Naive thymus-derived CD8-positive, alpha-beta T cell (primary cell): ENCODE measurements at regions of chr17 and their contacts with region 1.

Region 1: DNA sequence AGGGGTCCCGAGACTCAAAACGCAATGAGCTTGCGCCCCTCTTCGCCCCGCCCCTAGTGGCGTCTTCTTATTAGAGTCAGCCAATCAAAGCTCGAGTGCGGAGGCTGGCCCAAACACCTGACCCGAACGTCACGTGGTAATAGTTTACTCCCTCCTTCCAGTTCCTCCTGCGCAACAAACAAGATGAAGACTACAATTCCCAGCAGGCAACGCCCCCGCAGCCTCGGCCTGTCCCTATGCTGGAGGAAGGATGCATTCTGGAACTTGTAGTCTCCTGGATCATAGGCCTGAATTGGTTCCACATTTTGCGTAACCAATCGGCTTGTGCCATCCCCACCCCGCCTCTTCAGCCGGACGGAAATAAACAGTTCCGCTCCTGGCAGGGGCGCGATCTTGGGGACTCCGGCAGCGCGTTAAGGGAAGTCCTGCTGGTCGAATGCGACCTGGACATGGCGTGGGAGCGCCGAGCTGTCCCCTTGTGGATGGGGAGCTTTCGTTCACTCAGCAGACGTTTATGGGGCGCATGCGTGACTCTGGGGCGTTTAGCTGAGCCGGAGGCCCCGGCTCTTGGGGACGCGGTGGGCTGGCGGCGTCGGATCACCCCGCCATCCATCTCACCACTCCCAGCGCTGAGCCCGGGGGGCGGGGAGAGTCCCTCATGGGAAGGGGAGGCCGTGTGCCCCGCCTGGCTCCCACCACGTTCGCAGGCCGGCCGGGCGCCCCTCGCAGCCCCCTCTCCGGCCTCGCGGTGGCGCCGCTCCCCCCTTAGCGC is at the start of gene WBP2:
- DNase-seq: peak; percentile 90 to 99 (median 98)
- ATAC-seq: peak; percentile 87 to 91
- H3K4me3 Mint-ChIP-seq: peak within 1 kb of the TSS in 2 of 10 donors; percentile 90 to 95
- H3K27ac Mint-ChIP-seq: peak within 1 kb of the TSS in 6 of 10 donors; percentile 90 to 97 (median 92)
- H3K4me1 Mint-ChIP-seq: peaks cover 6 to 44% (median 28%) of the 10 kb centered on the region in 4 donors
- H3K27me3 Mint-ChIP-seq: no peaks in the 10 kb centered on the region
- polyA plus RNA-seq, gene WBP2: 58.1 to 95.1 (median 70.6) TPM

Region 2: GRCh38 chr17:75779231-75779986 is 76.1 kb before region 1 on chr17:
- POLR2A ChIA-PET with region 1: interaction called, 122 read pairs
- DNase-seq: peak; percentile 79 to 99 (median 95)
- ATAC-seq: peak; percentile 69 to 70
- H3K4me3 Mint-ChIP-seq: peak overlapping the region; percentile 85 to 100 (median 96)
- H3K27ac Mint-ChIP-seq: peak overlapping the region; percentile 94 to 100 (median 99)
- H3K4me1 Mint-ChIP-seq: peaks cover 26 to 67% (median 60%) of the 10 kb centered on the region in 4 donors
- H3K27me3 Mint-ChIP-seq: peaks cover 0 to 6% (median 0%) of the 10 kb centered on the region in 5 donors

Region 3: DNA sequence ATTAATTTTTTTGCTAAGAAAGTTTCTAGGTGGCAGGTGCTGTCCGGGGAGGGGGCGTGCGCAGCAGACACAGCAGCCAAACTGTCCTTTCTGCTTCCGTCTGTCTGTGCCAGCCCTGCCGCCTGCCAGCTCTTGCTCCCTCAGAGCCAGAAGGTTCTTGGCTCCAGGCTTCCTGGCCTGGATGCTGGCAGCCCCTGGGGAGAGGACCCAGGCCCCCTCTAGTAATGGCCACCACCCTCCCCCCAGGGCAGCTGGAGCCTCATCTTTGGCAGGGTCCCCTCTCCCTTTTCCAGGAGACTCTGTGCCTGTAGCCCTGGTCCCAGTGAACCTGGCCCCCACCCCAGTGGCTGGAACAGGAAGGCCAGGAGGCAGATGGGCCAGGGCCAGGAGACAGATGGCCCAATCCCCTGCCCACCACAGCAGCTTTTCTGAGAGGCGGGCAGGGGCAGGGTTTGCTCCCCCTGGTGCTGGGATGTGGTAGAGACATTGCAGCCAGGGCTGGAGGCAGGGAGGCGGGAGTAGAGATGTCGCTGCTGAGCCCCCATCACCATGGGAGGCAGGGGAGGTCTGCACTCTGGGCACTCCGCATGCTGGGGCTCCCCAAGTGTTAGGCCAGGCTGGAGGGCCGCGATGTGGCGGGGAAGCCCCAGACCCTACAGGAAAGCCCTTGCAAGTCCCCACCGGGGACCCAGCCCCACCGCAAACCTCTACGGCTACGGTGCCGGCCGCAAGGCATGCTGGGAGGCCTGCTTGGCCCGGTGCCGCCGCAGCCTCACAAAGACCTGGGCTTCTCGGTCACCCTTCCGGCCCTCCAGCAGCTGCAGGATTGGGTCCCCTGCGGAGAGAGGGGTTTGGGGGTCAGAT is 28.0 kb before region 1 on chr17:
- POLR2A ChIA-PET with region 1: interaction called, 38 read pairs
- DNase-seq: peak; percentile 47 to 82 (median 58)
- ATAC-seq: peak; percentile 68 to 70
- H3K4me3 Mint-ChIP-seq: peak overlapping the region; percentile 52 to 79 (median 63)
- H3K27ac Mint-ChIP-seq: peak overlapping the region; percentile 25 to 93 (median 85)
- H3K4me1 Mint-ChIP-seq: peaks cover 6 to 33% (median 20%) of the 10 kb centered on the region in 4 donors
- H3K27me3 Mint-ChIP-seq: no peaks in the 10 kb centered on the region

Region 4: GRCh38 chr17:75877752-75878173 is 22.3 kb after region 1 on chr17:
- POLR2A ChIA-PET with region 1: interaction called, 288 read pairs
- DNase-seq: peak; percentile 51 to 81 (median 66)
- ATAC-seq: peak; percentile 71
- H3K4me3 Mint-ChIP-seq: peak overlapping the region; percentile 80 to 92 (median 87)
- H3K27ac Mint-ChIP-seq: peak overlapping the region; percentile 65 to 96 (median 92)
- H3K4me1 Mint-ChIP-seq: peaks cover 25 to 57% (median 53%) of the 10 kb centered on the region in 4 donors
- H3K27me3 Mint-ChIP-seq: peaks cover 0 to 2% (median 0%) of the 10 kb centered on the region in 5 donors

Region 5: DNA sequence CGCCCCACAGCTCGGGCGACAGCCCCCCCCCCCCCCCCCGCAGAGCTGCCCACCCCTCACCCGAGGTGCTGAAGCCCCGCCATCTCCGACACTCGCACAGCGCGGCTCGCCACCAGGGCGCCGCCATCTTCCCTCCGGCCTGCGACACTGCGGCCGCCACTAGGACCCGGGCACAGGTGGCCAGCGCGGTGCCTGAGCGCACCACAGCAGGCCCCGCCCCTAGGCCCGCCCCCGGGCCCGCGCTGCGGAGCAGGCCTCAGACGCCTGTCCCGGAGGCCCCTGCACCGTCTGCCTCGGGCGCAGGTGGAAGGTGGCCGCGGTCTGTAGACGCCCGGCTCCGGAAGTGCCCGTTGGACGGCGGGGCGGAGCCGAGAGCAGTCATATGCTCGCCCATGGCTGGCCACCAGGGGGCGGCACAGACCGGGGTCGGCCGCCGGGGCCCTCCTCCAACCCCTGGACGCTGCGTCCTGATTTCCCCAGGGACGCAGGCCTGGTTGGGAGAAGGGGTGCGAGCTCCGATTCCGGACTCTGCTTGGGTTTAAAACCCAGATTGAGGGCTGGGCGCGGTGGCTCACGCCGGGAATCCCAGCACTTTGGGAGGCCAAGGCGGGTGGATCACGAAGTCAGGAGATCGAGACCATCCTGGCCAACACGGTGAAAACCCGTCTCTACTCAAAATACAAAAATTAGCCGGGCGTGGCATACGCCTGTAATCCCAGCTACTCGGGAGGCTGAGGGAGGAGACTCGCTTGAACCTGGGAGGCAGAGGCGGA is 49.4 kb after region 1 on chr17 and contains the start of gene MRPL38:
- POLR2A ChIA-PET with region 1: interaction called, 108 read pairs
- DNase-seq: peak; percentile 87 to 96 (median 92)
- ATAC-seq: peak; percentile 95 to 97
- H3K4me3 Mint-ChIP-seq: peak within 1 kb of the TSS; percentile 83 to 94 (median 90)
- H3K27ac Mint-ChIP-seq: peak within 1 kb of the TSS; percentile 85 to 97 (median 95)
- H3K4me1 Mint-ChIP-seq: peaks cover 9 to 29% (median 21%) of the 10 kb centered on the region in 4 donors
- H3K27me3 Mint-ChIP-seq: no peaks in the 10 kb centered on the region
- polyA plus RNA-seq, gene MRPL38: 56.4 to 78.7 (median 64.7) TPM

Region 6: GRCh38 chr17:76088036-76088867 is 232.8 kb after region 1 on chr17:
- POLR2A ChIA-PET with region 1: no interaction called
- DNase-seq: no peak
- ATAC-seq: no peak
- H3K4me3 Mint-ChIP-seq: no peak overlapping the region
- H3K27ac Mint-ChIP-seq: peak overlapping the region in 1 of 10 donors; percentile 38
- H3K4me1 Mint-ChIP-seq: peaks cover 0 to 5% (median 3%) of the 10 kb centered on the region in 4 donors
- H3K27me3 Mint-ChIP-seq: no peaks in the 10 kb centered on the region